Activated CD8-positive, alpha-beta memory T cell treated with anti-CD3 and anti-CD28 coated beads, Interleukin-2, amount 10 ng/mL, durations not matched to agents 7 days and 5 days (primary cell): ENCODE measurements at regions of chr12 and their contacts with region 1.

Region 1: DNA sequence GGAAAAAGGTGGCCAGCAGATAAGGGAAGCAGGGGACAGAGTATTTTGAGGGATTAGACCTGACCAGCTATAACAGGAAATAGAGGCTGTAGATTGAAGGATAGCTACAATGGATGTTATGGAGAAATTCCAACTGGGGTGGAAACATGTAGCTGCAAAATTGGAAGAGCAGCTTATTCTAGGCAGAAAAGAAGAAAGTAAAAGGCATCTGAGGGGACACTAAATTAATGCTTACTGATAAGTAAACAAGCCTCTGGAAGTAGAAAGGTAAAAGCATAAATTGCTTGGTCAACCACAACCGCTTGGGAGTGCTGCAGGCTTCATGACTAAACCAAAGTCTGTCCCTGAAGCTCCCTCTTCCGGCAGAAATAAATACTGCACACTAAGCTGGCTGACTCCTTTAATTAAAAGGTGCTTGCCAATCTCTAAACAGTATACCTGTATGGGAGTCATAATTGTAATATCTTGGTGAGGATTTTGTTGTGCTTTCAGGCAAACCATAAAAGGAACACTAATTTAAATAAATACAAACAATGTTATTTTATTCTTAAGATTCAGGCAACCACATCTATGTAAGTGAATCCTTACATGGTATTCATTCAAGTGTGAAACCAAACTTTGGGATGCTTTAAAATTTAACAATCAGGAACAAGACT is 7.7 kb downstream of the UBC start:
- DNase-seq: peak; percentile 96
- ATAC-seq: peak; percentile 58
- H3K4me3 Mint-ChIP-seq: no peak overlapping the region
- H3K27ac Mint-ChIP-seq: peak overlapping the region; percentile 61
- H3K4me1 Mint-ChIP-seq: peaks cover 34% of the 10 kb centered on the region
- H3K27me3 Mint-ChIP-seq: no peaks in the 10 kb centered on the region

Region 2: DNA sequence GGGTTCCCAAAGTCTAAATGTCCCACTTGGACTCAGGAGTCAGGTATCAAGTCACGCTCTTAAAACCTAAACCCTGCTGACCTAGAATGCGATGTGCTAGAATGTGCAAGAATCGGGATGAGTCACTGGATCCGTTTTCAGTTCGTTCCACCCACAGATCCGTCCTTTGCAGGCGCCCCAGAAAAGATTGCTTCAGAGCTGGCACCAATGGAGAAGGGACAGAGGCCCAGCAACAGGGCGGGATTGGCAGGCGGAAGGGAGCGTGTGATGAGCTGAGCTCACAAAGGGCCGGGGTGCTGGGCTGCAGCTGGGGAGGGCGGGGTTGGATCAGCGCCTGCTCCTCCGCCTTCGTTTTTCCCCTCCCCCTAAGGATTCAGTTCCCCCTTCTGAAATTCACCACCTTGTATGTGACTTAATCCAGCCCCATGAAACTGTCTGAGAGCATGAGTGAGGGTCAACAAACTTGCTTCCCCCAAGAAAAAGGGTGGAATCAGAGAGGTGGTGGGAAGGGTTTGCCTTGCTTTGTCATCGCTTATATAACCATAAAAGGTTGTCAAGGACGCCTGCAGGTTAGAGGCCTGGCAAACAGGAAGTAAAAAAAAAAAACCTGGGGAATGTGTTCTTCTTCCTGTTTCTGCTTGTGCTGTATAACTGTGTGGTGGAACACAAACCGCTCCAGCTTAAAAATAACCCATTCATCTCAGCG is 10.6 kb after region 1 on chr12:
- CTCF ChIA-PET with region 1: interaction called, 60 read pairs
- DNase-seq: peak; percentile 98
- ATAC-seq: peak; percentile 72
- H3K4me3 Mint-ChIP-seq: peak overlapping the region; percentile 98
- H3K27ac Mint-ChIP-seq: peak overlapping the region; percentile 100
- H3K4me1 Mint-ChIP-seq: peaks cover 83% of the 10 kb centered on the region
- H3K27me3 Mint-ChIP-seq: peaks cover 4% of the 10 kb centered on the region

Region 3: DNA sequence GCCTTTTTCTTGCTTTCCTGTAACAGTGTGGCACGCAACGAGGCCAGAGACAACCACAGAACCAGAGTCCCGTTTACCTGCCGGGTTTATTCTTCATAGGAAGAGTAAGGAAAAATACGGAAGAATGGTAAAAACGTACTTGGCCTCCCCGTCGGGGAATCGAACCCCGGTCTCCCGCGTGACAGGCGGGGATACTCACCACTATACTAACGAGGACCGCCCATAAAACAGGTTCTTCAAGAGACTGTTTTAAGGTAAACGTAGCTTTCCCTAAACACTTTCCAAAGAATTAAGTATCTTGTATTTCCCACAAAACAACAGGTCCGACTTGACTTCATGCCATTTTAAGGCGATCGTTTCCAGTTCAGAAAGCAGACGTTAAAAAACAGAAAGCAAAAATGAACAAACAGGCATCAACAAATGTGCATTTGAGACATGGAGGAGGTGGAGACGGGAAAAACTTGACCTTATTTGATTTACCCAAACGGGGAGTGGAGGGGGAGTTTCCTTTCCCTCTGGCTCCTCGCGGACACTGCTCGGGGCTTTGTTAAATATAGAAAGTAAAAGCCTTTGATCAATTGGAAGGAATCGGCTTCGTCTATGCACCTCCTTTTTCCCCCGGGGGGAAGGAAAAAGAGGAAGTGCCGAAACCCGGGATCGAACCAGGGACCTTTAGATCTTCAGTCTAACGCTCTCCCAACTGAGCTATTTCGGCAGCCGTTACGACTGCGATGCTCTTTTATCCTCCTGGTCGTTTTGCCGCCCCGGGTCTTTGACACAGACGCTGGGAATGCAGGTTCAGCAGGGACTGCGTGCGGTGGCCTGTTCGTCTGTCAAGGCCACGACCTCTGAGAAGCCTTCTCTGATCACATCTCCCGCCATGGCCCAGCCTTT is 20.7 kb after region 1 on chr12:
- CTCF ChIA-PET with region 1: interaction called, 11 read pairs
- DNase-seq: peak; percentile 96
- ATAC-seq: peak; percentile 92
- H3K4me3 Mint-ChIP-seq: peak overlapping the region; percentile 79
- H3K27ac Mint-ChIP-seq: peak overlapping the region; percentile 93
- H3K4me1 Mint-ChIP-seq: peaks cover 27% of the 10 kb centered on the region
- H3K27me3 Mint-ChIP-seq: no peaks in the 10 kb centered on the region

Region 4: DNA sequence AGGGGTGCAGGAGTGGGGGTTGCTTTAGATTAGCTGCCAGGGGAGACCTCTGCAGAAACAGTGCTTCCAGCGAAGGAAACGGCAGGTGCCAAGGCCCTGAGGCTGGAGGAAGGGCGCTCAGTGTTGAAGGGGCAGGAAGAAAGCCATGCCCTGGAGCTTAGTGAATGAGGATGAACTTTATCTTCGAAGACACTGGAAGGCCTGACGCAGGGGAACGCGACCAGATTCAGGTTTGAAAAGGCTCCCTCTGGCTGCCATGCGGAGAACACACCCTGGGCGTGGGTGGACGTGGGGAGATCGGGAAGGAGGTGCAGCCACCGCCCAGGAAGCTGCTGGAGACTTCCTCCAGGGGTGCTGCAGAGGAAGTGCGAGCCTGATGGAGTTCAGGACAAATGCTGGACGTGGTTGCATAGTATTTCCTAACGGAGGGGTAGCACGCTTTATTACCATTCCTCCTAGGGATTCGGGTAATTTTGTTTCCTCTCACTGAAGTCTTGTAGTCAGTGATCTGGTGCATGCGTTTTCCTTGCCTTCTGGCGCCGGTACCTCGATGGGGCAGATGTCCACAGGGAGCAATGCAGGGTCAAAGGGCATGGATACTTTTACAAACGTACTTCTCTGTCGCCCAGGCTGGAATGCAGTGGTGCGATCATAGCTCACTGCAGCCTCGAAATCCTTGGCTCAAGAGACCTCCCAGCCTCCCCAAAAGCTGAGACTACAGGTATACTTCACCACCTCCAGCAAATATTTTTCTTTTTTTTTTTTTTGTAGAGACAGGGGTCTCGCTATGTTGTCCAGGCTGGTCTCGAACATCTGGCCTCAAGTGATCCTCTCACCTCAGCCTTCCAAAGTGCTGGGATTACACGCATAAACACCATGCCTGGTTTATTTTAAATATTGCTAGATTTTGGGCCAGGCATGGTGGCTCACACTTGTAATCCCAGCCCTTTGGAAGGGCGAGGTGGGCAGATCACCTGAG is 34.1 kb after region 1 on chr12:
- CTCF ChIA-PET with region 1: interaction called, 553 read pairs
- DNase-seq: peak; percentile 93
- ATAC-seq: peak; percentile 56
- H3K4me3 Mint-ChIP-seq: no peak overlapping the region
- H3K27ac Mint-ChIP-seq: no peak overlapping the region
- H3K4me1 Mint-ChIP-seq: peaks cover 18% of the 10 kb centered on the region
- H3K27me3 Mint-ChIP-seq: no peaks in the 10 kb centered on the region